Thyroid gland (tissue), 4 donors: ENCODE measurements at regions of chr11 and their contacts with region 1.

Region 1: GRCh38 chr11:45102810-45103621 is 43.4 kb upstream of the PRDM11 start:
- DNase-seq: peak; percentile 43 to 50
- H3K4me3 ChIP-seq: no peak overlapping the region
- H3K27ac ChIP-seq: no peak overlapping the region
- H3K4me1 ChIP-seq: peaks cover 0 to 9% of the 10 kb centered on the region in 2 donors
- H3K27me3 ChIP-seq: no peaks in the 10 kb centered on the region
- CTCF ChIP-seq: peak; percentile 81 to 98 (median 95)
- POLR2A ChIP-seq: no peak

Region 2: GRCh38 chr11:44927174-44927661 is 175.8 kb before region 1 on chr11:
- intact Hi-C with region 1: loop called (anchors 2 kb)
- DNase-seq: peak; percentile 63 to 72
- H3K4me3 ChIP-seq: no peak overlapping the region
- H3K27ac ChIP-seq: no peak overlapping the region
- H3K4me1 ChIP-seq: no peaks in the 10 kb centered on the region
- H3K27me3 ChIP-seq: no peaks in the 10 kb centered on the region
- CTCF ChIP-seq: peak; percentile 74 to 92 (median 86)
- POLR2A ChIP-seq: no peak

Region 3: DNA sequence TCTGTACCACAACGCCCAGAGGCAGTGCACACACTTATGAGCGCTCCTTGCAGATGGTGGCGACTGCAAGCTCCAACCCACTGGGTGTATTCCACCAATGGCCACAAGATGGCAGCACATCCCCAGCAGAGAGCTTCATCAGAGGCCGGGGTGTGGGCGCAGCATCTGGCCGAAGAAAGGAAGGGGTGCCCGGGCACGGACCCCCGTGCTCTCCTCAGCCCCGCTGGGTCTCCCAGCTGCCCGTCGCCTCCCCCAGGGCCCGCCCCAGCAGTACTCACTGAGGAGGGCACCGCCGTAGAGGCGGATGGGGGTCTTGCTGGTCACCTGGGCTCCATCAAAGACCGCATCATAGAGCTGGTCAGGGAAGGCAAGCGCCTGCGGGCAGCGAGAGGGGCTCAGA is 166.5 kb before region 1 on chr11:
- intact Hi-C with region 1: loop called (anchors 2 kb)
- DNase-seq: peak; percentile 80 to 83
- H3K4me3 ChIP-seq: no peak overlapping the region
- H3K27ac ChIP-seq: no peak overlapping the region
- H3K4me1 ChIP-seq: peaks cover 0 to 22% of the 10 kb centered on the region in 2 donors
- H3K27me3 ChIP-seq: no peaks in the 10 kb centered on the region
- CTCF ChIP-seq: peak; percentile 89 to 95 (median 92)
- POLR2A ChIP-seq: no peak

Region 4: DNA sequence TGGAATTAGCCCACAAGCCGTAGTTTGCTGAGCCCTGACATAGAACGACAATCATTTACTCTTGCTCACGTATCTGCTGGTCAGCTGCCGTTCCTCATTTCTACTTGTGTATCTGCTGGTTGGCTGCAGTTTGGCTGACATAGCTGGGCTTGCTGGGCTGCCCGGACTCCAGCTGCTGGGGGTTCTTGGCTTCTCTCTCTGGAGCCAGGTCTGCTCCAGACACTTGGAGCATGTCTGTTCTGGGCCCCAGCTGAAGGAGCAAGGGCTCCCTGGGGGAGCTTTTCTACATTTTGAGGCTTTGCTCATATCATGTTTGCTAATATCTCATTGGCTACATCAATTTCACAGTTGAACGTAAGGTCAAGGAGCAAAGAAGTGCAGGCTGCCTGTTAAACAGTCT is 90.7 kb after region 1 on chr11:
- intact Hi-C with region 1: no loop called
- DNase-seq: peak; percentile 88 to 92
- H3K4me3 ChIP-seq: no peak overlapping the region
- H3K27ac ChIP-seq: peak overlapping the region; percentile 15 to 77 (median 44)
- H3K4me1 ChIP-seq: peaks cover 7 to 8% of the 10 kb centered on the region in 2 donors
- H3K27me3 ChIP-seq: no peaks in the 10 kb centered on the region
- CTCF ChIP-seq: no peak
- POLR2A ChIP-seq: peak in 1 of 2 donors; percentile 49